Motor neuron (in vitro differentiated cells): ENCODE measurements at regions of chr1 and their contacts with region 1.

Region 1: GRCh38 chr1:11473491-11474034 is 5.4 kb upstream of the DISP3 start:
- ATAC-seq: peak; percentile 30 to 58 (median 46)
- H3K4me3 ChIP-seq: no peak overlapping the region
- H3K27ac ChIP-seq: no peak overlapping the region
- H3K4me1 ChIP-seq: peaks cover 13 to 25% of the 10 kb centered on the region in 2 donors

Region 2: DNA sequence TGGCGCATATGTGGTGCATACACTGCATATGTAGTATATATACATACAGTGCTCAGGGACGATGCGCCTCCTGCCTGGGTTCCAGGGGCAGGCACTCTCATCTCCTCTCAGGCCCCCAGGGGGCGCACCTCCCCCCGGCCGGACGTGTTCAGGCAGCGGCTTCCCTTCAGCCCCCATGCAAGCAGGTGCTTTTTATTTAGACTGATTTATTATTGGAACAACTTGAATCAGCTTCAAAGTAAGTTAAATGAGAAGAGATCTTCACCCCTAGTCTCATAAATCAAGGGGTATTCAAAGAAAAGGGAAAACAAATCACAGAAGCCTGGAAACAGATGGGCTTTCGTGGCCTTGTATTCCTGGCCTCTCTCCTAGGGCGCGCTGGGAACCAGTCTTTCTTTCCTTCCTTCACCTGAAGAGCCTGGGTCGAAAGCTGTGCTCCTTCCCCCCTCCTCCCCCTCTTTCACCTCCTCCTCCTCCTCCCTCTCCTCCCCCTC is 135.9 kb before region 1 on chr1:
- in situ Hi-C with region 1: loop called in 1 of 9 experiments (anchors 25 kb)
- ATAC-seq: peak; percentile 42 to 85 (median 60)
- H3K4me3 ChIP-seq: no peak overlapping the region
- H3K27ac ChIP-seq: no peak overlapping the region
- H3K4me1 ChIP-seq: peaks cover 56 to 76% of the 10 kb centered on the region in 2 donors

Region 3: DNA sequence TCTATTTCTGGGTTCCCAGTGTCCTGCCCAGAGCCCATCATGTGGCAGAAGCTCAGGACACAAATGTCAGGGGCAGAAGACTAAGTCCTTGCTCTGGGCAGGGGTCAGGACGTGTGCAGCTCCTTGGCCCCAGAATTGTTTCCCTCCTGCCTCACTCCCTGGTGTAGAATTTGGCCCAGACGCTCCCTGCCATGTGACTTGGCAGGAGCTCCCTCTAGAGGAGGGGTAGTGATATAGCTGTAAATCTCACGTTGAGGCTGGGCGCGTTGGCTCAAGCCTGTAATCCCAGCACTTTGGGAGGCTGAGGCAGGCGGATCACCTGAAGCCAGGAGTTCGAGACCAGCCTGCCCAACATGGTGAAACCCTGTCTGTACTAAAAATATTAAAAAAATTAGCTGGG is 109.4 kb before region 1 on chr1:
- in situ Hi-C with region 1: no loop called
- ATAC-seq: no peak
- H3K4me3 ChIP-seq: no peak overlapping the region
- H3K27ac ChIP-seq: no peak overlapping the region
- H3K4me1 ChIP-seq: peaks cover 27 to 33% of the 10 kb centered on the region in 2 donors

Region 4: DNA sequence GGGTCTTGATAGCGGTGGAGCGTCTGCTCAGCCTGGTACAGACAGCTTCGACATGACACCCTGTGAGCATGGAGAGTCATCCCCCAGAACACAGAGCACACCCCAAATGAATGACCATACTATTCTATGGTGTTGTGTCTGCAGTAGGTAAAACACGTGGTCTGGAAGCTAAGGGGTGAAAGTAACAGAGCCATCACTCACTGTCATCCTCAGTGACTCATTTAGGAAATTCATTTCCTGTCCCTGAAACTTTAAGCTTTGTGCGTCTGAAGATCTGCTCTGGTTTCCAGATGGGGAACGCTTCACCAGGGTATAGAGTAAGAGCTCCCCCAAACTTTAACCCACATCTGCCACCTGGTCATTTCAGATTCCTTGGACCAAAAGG is 89.4 kb before region 1 on chr1:
- in situ Hi-C with region 1: no loop called
- ATAC-seq: peak in 5 of 8 experiments; percentile 34 to 50 (median 42)
- H3K4me3 ChIP-seq: no peak overlapping the region
- H3K27ac ChIP-seq: no peak overlapping the region
- H3K4me1 ChIP-seq: peaks cover 11 to 19% of the 10 kb centered on the region in 2 donors